Panc1 (cell line): ENCODE measurements at regions of chr4 and their contacts with region 1.

Region 1: DNA sequence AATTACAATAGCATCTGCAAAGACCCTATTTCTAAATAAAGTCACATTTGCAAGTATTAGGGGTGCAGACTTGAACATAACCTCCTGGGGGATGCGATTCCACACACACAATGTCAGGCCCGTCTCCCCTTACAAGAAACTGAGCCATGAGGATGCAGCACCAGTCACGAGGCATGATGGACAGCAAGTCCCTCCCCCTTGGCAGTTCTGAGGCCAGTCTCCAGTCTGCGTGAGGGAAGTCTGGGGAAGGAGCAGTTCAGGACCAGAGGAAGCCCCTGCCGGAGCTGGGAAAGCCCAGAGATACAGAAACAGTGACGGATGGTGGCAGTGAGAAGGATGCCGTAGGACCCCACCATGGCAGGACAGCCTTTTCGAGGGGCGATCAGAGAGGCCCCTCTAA is 9.4 kb downstream of the FAM53A start:
- DNase-seq: no peak
- ATAC-seq: no peak
- H3K4me3 ChIP-seq: no peak overlapping the region
- H3K27ac ChIP-seq: no peak overlapping the region
- H3K4me1 ChIP-seq: no peaks in the 10 kb centered on the region
- H3K27me3 ChIP-seq: no peaks in the 10 kb centered on the region
- CTCF ChIP-seq: no peak

Region 2: DNA sequence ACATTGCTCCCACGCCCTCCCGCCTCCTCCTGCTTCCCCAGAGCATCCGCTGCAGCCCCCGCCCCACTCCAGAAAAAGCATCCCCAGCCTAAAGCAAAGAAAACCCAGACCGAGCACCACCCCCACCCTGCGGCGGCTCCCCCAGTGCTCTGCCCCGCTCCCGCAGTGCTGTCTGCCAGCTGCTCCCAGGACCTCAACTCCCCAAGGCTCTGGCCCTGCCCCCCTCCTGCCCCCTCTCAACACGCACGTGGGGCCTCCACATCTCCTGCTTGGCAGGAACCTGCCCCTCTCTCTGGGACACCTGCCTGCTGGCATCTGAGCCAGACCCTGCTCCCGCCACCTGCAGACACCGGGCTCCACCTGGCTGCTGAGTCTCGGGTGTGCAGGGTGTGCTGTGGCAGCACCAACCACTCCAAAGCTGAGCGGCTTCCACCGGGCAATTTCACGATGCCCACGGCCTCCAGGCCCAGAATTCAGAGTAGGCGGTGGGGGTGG is 69.9 kb before region 1 on chr4:
- CTCF ChIA-PET with region 1: no interaction called
- POLR2A ChIA-PET with region 1: no interaction called
- in situ Hi-C with region 1: no loop called
- intact Hi-C with region 1: no loop called
- DNase-seq: no peak
- ATAC-seq: peak; percentile 72
- H3K4me3 ChIP-seq: no peak overlapping the region
- H3K27ac ChIP-seq: no peak overlapping the region
- H3K4me1 ChIP-seq: peaks cover 4% of the 10 kb centered on the region
- H3K27me3 ChIP-seq: no peaks in the 10 kb centered on the region
- CTCF ChIP-seq: no peak

Region 3: GRCh38 chr4:1928356-1929239 is 253.9 kb after region 1 on chr4:
- CTCF ChIA-PET with region 1: no interaction called
- POLR2A ChIA-PET with region 1: interaction called, 10 read pairs
- in situ Hi-C with region 1: no loop called
- intact Hi-C with region 1: no loop called
- DNase-seq: no peak
- ATAC-seq: 0 out of 2 replicates have a peak, but pooled peaks have one; percentile 15
- H3K4me3 ChIP-seq: no peak overlapping the region
- H3K27ac ChIP-seq: no peak overlapping the region
- H3K4me1 ChIP-seq: no peaks in the 10 kb centered on the region
- H3K27me3 ChIP-seq: no peaks in the 10 kb centered on the region
- CTCF ChIP-seq: no peak